IMR-90 (cell line): ENCODE measurements at regions of chr3 and their contacts with region 1.

Region 1: DNA sequence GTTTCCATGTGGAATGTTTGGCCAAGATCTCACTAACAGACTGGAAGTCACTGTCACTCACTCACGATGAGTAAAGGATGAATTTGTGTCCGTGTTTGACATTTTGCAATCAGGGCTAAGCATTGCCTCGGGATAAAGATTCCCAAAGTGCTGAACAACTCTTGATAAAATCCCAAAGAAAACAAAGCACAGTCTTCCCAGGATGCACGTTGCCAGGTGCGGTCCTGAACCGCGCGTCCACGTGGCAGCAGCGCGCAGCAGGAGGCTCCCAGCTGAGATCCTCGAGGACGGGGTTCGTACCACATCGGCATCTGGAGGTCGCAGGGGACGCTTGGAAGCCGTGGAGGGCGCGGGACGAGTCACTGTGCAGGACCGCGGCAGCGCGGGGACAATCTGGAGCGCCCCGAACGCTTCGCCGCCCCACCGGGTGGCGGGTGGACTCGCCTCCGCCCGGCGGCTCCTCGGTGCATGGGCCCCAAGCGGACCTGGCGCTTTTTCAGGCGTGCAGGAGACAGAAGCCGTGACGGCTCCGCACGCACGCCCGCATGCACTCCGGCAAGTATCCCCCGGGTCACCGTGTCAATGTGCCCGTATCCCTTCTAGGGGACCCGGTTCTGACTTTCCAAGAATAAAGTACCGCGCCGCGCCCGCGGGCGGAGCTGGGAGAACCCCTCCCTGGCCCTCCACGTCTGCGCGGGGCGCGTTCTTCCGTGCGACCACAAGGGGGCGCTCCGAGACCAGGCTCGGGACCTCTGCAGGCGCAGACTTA is 17.7 kb downstream of the CPN2 start:
- DNase-seq: peak; percentile 80
- ATAC-seq: peak; percentile 90
- H3K4me3 ChIP-seq: peak overlapping the region; percentile 53
- H3K27ac ChIP-seq: no peak overlapping the region
- H3K4me1 ChIP-seq: peaks cover 12% of the 10 kb centered on the region
- H3K27me3 ChIP-seq: no peaks in the 10 kb centered on the region; the same call in 1 of the 2 replicates
- CTCF ChIP-seq: peak; percentile 97
- POLR2A ChIP-seq: 0 out of 2 replicates have a peak, but pooled peaks have one; percentile 38
- RAD21 ChIP-seq: peak; percentile 100

Region 2: DNA sequence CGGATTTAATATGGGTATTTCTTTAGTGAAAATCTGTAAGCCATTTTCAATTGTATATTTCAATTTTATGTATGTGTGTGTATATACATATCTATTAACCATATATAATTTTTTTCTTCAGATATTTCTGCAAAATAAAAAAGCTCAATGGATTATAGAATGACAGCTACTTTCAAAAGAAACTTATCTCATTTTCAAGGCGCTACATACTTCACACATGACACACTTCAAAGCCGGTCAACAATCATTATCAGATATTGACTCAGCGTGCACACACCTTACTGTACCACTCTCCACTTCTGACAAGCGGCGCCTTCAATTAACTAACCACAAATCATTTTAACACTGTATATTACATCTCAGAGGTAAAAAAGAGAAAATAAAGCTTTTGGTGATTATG is 113.8 kb after region 1 on chr3:
- CTCF ChIA-PET with region 1: no interaction called
- POLR2A ChIA-PET with region 1: no interaction called
- dilution Hi-C with region 1: no loop called
- in situ Hi-C with region 1: no loop called
- intact Hi-C with region 1: no loop called
- DNase-seq: no peak
- ATAC-seq: no peak
- H3K4me3 ChIP-seq: no peak overlapping the region
- H3K27ac ChIP-seq: no peak overlapping the region
- H3K4me1 ChIP-seq: no peaks in the 10 kb centered on the region; the same call in 1 of the 2 replicates
- H3K27me3 ChIP-seq: no peaks in the 10 kb centered on the region
- CTCF ChIP-seq: no peak
- POLR2A ChIP-seq: no peak
- RAD21 ChIP-seq: no peak

Region 3: DNA sequence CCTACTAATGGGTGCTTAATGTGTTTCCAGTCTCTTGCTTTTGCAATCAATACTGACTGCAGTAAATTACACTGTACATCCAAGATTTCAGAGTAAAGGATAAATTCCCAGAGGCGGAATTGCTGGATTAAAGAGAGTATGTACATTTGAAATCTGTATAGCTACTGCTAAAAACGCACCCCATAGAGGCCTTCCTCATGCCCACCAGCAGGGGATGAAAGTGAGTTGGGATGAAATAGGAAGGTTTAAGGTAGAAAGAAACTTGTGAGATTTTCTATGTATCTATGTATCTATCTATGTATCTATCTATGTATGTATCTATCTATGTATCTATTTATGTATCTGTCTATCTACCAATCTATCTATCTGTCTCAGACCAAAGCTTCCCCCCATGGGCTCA is 271.4 kb after region 1 on chr3:
- CTCF ChIA-PET with region 1: no interaction called
- POLR2A ChIA-PET with region 1: no interaction called
- dilution Hi-C with region 1: no loop called
- in situ Hi-C with region 1: loop called (anchors 10 kb)
- intact Hi-C with region 1: no loop called
- DNase-seq: no peak
- ATAC-seq: peak; percentile 46
- H3K4me3 ChIP-seq: no peak overlapping the region
- H3K27ac ChIP-seq: no peak overlapping the region
- H3K4me1 ChIP-seq: peaks cover 5% of the 10 kb centered on the region; the same call in 1 of the 2 replicates
- H3K27me3 ChIP-seq: no peaks in the 10 kb centered on the region
- CTCF ChIP-seq: peak; percentile 47
- POLR2A ChIP-seq: no peak
- RAD21 ChIP-seq: no peak

Region 4: DNA sequence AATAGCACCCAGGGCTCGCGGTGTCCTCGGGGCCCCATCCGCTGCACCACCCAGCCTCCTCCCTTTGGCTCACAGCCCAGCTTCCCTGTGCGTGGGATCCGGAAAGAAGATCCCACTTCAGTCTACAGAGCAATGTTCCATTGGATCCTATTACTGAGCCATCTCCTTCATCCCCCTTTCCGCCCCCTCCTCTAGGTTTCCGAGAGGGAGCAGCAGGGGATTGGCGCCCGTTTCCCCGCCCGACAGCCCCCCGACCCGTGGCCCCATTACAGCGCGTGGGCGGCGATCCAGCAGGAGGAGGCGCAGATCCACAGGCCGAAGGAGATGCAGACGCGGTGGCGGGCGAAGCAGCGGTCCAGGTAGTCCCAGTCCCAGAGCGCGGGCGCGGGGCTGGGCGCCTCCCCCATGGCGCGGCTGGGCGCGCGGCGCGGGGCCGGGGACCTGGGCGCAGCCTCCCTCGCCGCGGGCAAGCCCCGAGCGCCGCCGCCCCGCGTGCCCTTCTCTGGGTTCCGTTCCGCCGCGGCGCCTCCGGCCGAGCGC is 299.5 kb after region 1 on chr3:
- CTCF ChIA-PET with region 1: interaction called, 3 read pairs
- POLR2A ChIA-PET with region 1: no interaction called
- dilution Hi-C with region 1: no loop called
- in situ Hi-C with region 1: no loop called
- intact Hi-C with region 1: loop called (anchors 1 kb)
- DNase-seq: peak; percentile 38
- ATAC-seq: peak; percentile 62
- H3K4me3 ChIP-seq: peak overlapping the region; percentile 75
- H3K27ac ChIP-seq: peak overlapping the region; percentile 64
- H3K4me1 ChIP-seq: peaks cover 3% of the 10 kb centered on the region
- H3K27me3 ChIP-seq: no peaks in the 10 kb centered on the region
- CTCF ChIP-seq: no peak
- POLR2A ChIP-seq: no peak
- RAD21 ChIP-seq: no peak

Region 5: DNA sequence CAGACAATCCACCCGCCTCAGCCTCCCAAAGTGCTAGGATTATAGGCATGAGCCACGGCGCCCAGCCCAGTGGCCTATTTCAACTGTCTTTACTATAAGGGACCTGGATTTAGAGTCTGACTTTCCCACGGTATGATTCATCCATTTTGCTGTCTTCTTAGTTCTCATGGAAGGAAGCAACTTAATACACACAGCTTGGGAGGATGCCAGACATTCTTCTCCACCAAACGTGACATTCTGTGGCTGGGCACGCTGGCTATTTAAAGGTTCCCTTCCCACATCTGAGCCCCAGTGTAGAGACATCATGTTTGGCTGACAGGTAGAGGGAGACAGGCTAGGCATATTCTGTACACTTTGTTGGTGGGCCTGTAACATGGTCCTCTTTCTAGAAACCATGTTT is 378.5 kb after region 1 on chr3:
- CTCF ChIA-PET with region 1: no interaction called
- POLR2A ChIA-PET with region 1: no interaction called
- dilution Hi-C with region 1: no loop called
- in situ Hi-C with region 1: no loop called
- intact Hi-C with region 1: no loop called
- DNase-seq: peak; percentile 91
- ATAC-seq: peak; percentile 69
- H3K4me3 ChIP-seq: no peak overlapping the region
- H3K27ac ChIP-seq: no peak overlapping the region
- H3K4me1 ChIP-seq: no peaks in the 10 kb centered on the region
- H3K27me3 ChIP-seq: peaks cover 25% of the 10 kb centered on the region
- CTCF ChIP-seq: no peak
- POLR2A ChIP-seq: no peak
- RAD21 ChIP-seq: no peak

Region 6: DNA sequence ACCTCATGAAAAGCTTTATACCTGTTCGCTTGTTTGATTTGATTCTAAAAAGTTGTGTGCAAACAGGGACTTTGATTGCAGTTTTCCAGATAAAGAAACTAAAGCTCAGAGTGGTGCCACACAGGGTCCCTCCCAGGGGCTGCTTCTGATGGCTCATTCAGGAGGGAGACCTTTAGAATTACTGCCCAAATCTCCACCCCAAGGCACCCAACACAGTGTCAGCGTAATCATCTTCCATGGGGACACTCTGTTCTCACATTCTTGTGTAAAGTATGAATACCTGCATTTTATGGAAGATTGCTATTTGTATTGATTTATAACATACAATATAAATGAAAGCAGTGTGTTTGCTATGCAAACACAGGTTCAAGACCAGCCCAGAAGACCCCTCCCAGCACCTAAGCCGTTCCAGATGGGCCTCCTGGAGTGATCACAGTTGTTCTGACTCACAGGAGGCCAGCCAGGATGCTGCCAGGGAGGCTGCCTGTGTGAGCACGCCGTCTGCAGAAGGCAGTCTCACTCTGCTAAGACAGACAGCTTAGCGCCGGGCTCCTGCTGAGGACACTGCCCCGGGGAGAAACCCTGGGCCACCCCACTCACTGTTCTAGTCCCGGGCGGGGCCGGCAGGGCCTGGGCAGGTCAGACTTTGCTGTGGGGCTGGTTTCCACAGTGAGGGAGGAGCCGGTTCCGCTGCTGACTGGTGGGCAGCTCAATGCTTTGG is 537.9 kb after region 1 on chr3:
- CTCF ChIA-PET with region 1: no interaction called
- POLR2A ChIA-PET with region 1: no interaction called
- dilution Hi-C with region 1: no loop called
- in situ Hi-C with region 1: loop called (anchors 25 kb)
- intact Hi-C with region 1: no loop called
- DNase-seq: peak; percentile 91
- ATAC-seq: peak; percentile 83
- H3K4me3 ChIP-seq: no peak overlapping the region
- H3K27ac ChIP-seq: peak overlapping the region; percentile 86
- H3K4me1 ChIP-seq: peaks cover 17% of the 10 kb centered on the region
- H3K27me3 ChIP-seq: 0 out of 2 replicates have a peak, but pooled peaks cover 3% of the 10 kb centered on the region
- CTCF ChIP-seq: 0 out of 2 replicates have a peak, but pooled peaks have one; percentile 8
- POLR2A ChIP-seq: peak; percentile 48; the same call in 1 of the 2 replicates
- RAD21 ChIP-seq: peak; percentile 36

Region 7: DNA sequence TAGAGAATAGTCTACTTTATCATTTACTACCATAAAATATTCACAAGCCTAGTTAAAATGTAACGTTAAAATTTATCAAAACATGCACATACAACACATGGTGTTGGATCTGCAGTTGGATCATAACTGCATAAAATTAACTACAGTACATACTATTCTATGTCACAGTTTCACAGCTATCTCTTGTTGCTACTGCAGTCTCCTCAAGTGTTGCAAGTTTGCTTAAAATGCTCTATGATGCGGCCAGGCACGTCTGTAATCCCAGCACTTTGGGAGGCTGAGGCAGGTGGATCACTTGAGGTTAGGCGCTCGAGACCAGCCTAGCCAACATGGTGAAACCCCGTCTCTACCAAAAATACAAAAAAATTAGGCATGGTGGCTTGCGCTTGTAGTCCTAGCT is 1199.4 kb after region 1 on chr3:
- CTCF ChIA-PET with region 1: no interaction called
- POLR2A ChIA-PET with region 1: no interaction called
- dilution Hi-C with region 1: no loop called
- in situ Hi-C with region 1: no loop called
- intact Hi-C with region 1: no loop called
- DNase-seq: no peak
- ATAC-seq: no peak
- H3K4me3 ChIP-seq: no peak overlapping the region
- H3K27ac ChIP-seq: no peak overlapping the region
- H3K4me1 ChIP-seq: no peaks in the 10 kb centered on the region
- H3K27me3 ChIP-seq: no peaks in the 10 kb centered on the region
- CTCF ChIP-seq: no peak
- POLR2A ChIP-seq: no peak
- RAD21 ChIP-seq: no peak